A549 (cell line): ENCODE measurements at regions of chr16 and their contacts with region 1.

Region 1: DNA sequence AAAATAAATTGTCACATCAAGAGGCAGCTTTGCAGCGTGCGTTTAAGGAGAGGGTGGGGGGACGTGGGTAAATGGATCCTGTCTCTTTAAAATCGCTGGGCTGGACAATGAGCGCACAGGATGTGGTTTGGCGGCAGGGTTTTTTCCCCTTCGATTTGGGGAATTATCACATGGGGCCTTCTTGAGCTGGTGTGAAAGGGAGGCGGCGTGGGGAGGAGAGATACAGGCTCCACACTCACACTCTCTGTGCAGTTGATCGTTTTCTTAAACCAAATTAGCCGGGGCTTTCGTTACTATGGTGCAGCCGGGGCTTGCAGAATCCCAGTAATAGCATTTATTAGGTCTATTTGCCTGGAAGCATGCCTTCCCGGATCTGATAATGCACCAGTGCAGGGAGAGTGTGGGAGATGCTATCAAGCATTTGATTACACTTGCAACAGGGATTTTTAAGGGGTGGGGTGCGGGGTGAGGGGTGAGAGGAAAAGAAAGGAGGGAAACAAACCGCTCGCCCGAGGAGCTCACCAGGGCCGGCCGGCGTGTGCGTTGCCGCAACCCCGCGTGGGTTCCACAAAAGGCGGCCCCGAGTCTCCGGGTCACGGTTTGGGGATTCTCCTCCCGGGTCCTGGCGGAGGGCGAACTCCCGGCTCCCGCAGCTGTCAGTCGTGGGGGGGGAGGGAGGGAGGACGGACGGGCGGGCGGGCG is 58.9 kb upstream of the GSE1 start:
- DNase-seq: peak; percentile 81 to 88
- ATAC-seq: peak; percentile 54 to 72
- H3K4me3 ChIP-seq: peak overlapping the region; percentile 71
- H3K27ac ChIP-seq: peak overlapping the region; percentile 91 to 99
- H3K4me1 ChIP-seq: peaks cover 23% of the 10 kb centered on the region
- CTCF ChIP-seq: no peak
- EP300 ChIP-seq: no peak
- POLR2A ChIP-seq: 0 out of 2 replicates have a peak, but pooled peaks have one; percentile 29
- RAD21 ChIP-seq: no peak

Region 2: GRCh38 chr16:85334718-85335583 is 219.3 kb before region 1 on chr16:
- CTCF ChIA-PET with region 1: no interaction called
- POLR2A ChIA-PET with region 1: no interaction called
- DNase-seq: no peak
- ATAC-seq: no peak
- H3K4me3 ChIP-seq: no peak overlapping the region
- H3K27ac ChIP-seq: no peak overlapping the region
- H3K4me1 ChIP-seq: peaks cover 10% of the 10 kb centered on the region; the same call in 2 of the 3 replicates
- CTCF ChIP-seq: no peak
- EP300 ChIP-seq: no peak
- POLR2A ChIP-seq: no peak
- RAD21 ChIP-seq: no peak

Region 3: GRCh38 chr16:85479972-85480751 is 74.1 kb before region 1 on chr16:
- CTCF ChIA-PET with region 1: interaction called, 46 read pairs
- POLR2A ChIA-PET with region 1: no interaction called
- DNase-seq: peak; percentile 67 to 94
- ATAC-seq: peak; percentile 89 to 95
- H3K4me3 ChIP-seq: no peak overlapping the region
- H3K27ac ChIP-seq: peak overlapping the region; percentile 18 to 70; a peak in 2 of 6 replicates
- H3K4me1 ChIP-seq: 0 out of 3 replicates have a peak, but pooled peaks cover 3% of the 10 kb centered on the region
- CTCF ChIP-seq: peak; percentile 73
- EP300 ChIP-seq: no peak
- POLR2A ChIP-seq: no peak
- RAD21 ChIP-seq: peak; percentile 65 to 76

Region 4: DNA sequence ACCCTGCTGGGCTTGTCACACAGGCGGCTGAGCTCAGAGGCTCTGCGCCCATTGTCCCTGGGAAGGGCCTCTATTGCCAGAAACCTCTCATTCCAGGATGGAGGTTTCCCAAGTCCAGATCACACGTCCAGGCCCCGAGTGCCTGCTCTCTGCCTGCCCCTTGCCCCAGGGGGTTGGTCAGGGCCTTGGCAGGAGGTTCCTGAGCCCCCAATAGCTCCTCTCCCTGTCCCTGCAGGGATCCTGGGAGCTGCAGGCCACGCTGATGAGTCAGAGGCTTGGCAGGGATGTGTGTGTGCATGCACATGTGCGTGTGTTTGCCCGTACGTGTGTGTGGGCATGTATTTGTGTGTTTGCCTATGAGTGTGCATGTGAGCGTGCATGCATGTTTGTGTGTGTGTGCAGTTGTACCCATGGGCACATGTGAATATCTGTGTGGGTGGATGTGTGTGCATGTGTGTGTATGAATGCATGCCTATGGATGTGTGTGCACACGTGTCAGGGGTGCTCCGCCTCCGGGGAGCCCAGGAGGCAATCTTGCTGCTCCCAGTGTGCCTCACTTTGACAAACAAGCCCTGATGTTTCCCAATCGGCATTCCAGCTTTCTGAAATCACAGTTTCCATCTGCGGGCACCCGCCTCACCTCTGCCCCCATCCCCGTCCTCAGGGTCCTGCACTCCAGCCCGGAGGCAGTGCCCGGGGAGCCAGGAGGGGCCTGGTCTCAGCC is 39.5 kb before region 1 on chr16:
- CTCF ChIA-PET with region 1: interaction called, 20 read pairs
- POLR2A ChIA-PET with region 1: interaction called, 28 read pairs
- DNase-seq: peak; percentile 92 to 95
- ATAC-seq: peak; percentile 85 to 89
- H3K4me3 ChIP-seq: peak overlapping the region; percentile 24; the same call in 2 of the 3 replicates
- H3K27ac ChIP-seq: peak overlapping the region; percentile 95 to 97
- H3K4me1 ChIP-seq: peaks cover 36% of the 10 kb centered on the region
- CTCF ChIP-seq: no peak
- EP300 ChIP-seq: peak; percentile 28 to 78; a peak in 2 of 5 replicates
- POLR2A ChIP-seq: 0 out of 2 replicates have a peak, but pooled peaks have one; percentile 14
- RAD21 ChIP-seq: peak in 1 of 2 experiments; percentile 45; a peak in 2 of 5 replicates

Region 5: GRCh38 chr16:85528528-85529387 is 25.5 kb before region 1 on chr16:
- CTCF ChIA-PET with region 1: interaction called, 47 read pairs
- POLR2A ChIA-PET with region 1: interaction called, 10 read pairs
- DNase-seq: peak; percentile 26 to 60
- ATAC-seq: peak in 1 of 2 experiments; percentile 60; a peak in 3 of 6 replicates
- H3K4me3 ChIP-seq: no peak overlapping the region
- H3K27ac ChIP-seq: 0 out of 6 replicates have a peak overlapping the region, but pooled peaks of 1 of the 2 experiments have one; percentile 15
- H3K4me1 ChIP-seq: peaks cover 21% of the 10 kb centered on the region
- CTCF ChIP-seq: peak; percentile 36; the same call in 2 of the 3 replicates
- EP300 ChIP-seq: no peak
- POLR2A ChIP-seq: no peak
- RAD21 ChIP-seq: no peak

Region 6: DNA sequence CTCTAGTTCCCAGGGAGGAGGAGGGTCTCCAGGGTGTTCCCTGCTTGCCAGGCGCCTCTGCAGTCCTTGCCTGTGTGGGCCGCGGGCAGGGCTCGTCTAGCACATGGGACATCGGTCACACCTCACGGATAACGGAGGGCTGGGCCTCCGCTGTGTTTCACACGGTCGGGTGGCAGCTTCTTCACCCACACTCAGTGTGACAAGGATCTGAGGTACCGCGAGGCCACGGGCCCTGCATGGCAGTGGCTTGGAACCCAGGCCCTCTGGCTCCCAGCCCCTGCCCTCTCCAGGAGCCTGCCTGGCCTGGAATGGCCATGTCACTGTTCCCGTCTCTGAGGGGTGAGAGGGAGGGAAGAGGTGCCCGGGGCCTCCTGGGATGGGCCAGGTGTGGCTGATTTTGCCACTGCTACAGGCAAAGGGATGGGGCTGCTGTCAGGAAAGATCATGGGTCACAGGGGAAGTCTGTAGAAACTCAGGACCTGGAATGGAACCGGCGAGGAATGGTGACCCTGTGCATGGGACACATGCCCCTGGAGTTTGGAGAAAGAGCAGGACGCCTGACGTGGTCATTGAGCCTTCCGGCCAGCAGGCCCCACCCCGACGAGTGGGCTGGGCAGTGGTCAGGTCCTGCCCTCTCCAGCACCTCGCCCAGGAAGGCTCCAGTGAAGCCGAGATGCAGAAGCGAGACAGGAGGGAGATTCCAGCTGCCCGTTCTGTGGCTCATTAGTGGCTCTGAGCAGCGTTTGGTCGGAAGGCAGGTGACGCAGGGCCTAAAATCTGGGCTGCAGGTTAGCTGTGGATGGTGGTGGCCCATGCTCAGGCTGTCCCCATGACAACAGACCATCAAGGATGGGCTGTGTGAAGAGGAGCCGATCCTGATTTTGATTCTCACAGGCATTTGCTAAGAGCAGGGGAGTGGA is 17.6 kb before region 1 on chr16:
- CTCF ChIA-PET with region 1: interaction called, 31 read pairs
- POLR2A ChIA-PET with region 1: interaction called, 6 read pairs
- DNase-seq: no peak
- ATAC-seq: no peak
- H3K4me3 ChIP-seq: no peak overlapping the region
- H3K27ac ChIP-seq: peak overlapping the region in 1 of 2 experiments; percentile 7; a peak in 1 of 6 replicates
- H3K4me1 ChIP-seq: no peaks in the 10 kb centered on the region
- CTCF ChIP-seq: no peak
- EP300 ChIP-seq: no peak
- POLR2A ChIP-seq: no peak
- RAD21 ChIP-seq: no peak

Region 7: GRCh38 chr16:85541980-85542900 is 12.0 kb before region 1 on chr16:
- CTCF ChIA-PET with region 1: interaction called, 31 read pairs
- POLR2A ChIA-PET with region 1: interaction called, 6 read pairs
- DNase-seq: no peak
- ATAC-seq: peak in 1 of 2 experiments; percentile 18; a peak in 2 of 6 replicates
- H3K4me3 ChIP-seq: no peak overlapping the region
- H3K27ac ChIP-seq: no peak overlapping the region
- H3K4me1 ChIP-seq: no peaks in the 10 kb centered on the region
- CTCF ChIP-seq: no peak
- EP300 ChIP-seq: no peak
- POLR2A ChIP-seq: no peak
- RAD21 ChIP-seq: no peak

Region 8: GRCh38 chr16:85569615-85570212 is 15.5 kb after region 1 on chr16:
- CTCF ChIA-PET with region 1: interaction called, 27 read pairs
- POLR2A ChIA-PET with region 1: no interaction called
- DNase-seq: no peak
- ATAC-seq: no peak
- H3K4me3 ChIP-seq: no peak overlapping the region
- H3K27ac ChIP-seq: no peak overlapping the region
- H3K4me1 ChIP-seq: no peaks in the 10 kb centered on the region
- CTCF ChIP-seq: no peak
- EP300 ChIP-seq: no peak
- POLR2A ChIP-seq: no peak
- RAD21 ChIP-seq: no peak

Region 9: GRCh38 chr16:85717393-85718121 is 163.3 kb after region 1 on chr16:
- CTCF ChIA-PET with region 1: no interaction called
- POLR2A ChIA-PET with region 1: no interaction called
- DNase-seq: peak; percentile 74 to 76
- ATAC-seq: peak; percentile 77 to 84
- H3K4me3 ChIP-seq: no peak overlapping the region
- H3K27ac ChIP-seq: no peak overlapping the region
- H3K4me1 ChIP-seq: no peaks in the 10 kb centered on the region
- CTCF ChIP-seq: peak; percentile 85
- EP300 ChIP-seq: no peak
- POLR2A ChIP-seq: no peak
- RAD21 ChIP-seq: peak; percentile 80 to 82

Region 10: DNA sequence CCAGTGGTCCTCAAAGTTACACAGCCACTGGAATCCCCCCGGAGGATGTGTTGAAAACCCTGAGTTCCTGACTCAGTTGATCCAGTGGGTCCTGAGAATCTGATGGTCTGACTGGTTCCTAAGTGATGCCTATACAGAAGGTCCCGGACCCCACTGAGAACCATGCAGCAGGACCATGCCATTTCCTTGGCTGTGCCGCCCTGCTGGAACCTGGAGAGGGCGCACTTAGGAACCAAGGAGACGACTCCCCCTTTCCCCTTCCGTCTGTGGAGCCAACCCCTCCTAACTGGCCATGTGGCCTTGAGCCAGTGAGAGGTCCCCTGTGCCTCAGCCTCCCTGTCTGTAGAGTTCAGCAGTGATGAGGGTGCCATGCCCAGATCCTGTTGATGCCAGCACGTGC is 174.6 kb after region 1 on chr16:
- CTCF ChIA-PET with region 1: no interaction called
- POLR2A ChIA-PET with region 1: no interaction called
- DNase-seq: no peak
- ATAC-seq: peak in 1 of 2 experiments; percentile 49; a peak in 2 of 6 replicates
- H3K4me3 ChIP-seq: no peak overlapping the region
- H3K27ac ChIP-seq: no peak overlapping the region
- H3K4me1 ChIP-seq: no peaks in the 10 kb centered on the region
- CTCF ChIP-seq: no peak
- EP300 ChIP-seq: no peak
- POLR2A ChIP-seq: no peak
- RAD21 ChIP-seq: no peak

Region 11: GRCh38 chr16:85832570-85833218 is 278.4 kb after region 1 on chr16:
- CTCF ChIA-PET with region 1: no interaction called
- POLR2A ChIA-PET with region 1: no interaction called
- DNase-seq: no peak
- ATAC-seq: no peak
- H3K4me3 ChIP-seq: no peak overlapping the region
- H3K27ac ChIP-seq: no peak overlapping the region
- H3K4me1 ChIP-seq: no peaks in the 10 kb centered on the region
- CTCF ChIP-seq: no peak
- EP300 ChIP-seq: no peak
- POLR2A ChIP-seq: no peak
- RAD21 ChIP-seq: no peak